Activated CD8-positive, alpha-beta T cell treated with anti-CD3 and anti-CD28 coated beads for 36 hours (primary cell): ENCODE measurements at regions of chr17 and their contacts with region 1.

Region 1: DNA sequence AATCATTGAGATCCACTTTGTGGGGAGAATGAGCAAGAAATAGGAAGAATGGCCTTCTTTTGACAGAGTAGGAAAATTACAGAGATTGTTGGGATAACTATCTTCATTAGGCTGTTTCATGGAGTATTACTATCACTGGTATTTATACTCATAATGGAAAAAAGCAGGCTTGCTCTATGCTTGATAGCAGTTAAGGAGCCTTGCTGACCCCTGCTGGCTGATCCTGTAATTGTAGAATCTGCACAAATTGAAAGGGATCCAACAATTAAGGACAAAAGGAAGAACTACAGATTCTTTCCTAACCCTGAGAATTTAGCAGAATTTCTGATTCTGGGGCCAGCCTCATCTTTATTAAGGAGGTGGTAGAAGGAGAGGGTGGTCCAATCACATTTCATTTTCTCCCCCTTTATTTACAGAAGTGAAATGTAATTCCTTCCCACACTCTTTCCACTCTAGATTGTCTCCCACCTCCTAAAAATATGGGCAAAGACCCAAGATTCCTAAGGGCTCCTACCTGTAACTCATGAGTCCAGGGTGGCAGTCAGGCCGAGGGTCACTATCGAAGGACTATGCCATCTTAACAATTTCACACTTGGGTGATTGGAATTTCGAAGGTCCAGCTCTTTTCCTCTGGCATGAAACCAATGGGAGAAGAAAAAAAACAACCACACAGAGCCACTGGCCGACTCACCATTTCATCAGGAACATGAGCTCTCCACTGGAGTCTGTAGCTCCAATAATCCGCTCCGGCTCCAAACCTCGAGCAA is 26.3 kb downstream of the NFE2L1 start:
- DNase-seq: peak; percentile 89
- ATAC-seq: peak; percentile 90
- H3K4me3 Mint-ChIP-seq: no peak overlapping the region
- H3K27ac Mint-ChIP-seq: no peak overlapping the region
- H3K4me1 Mint-ChIP-seq: no peaks in the 10 kb centered on the region
- H3K27me3 Mint-ChIP-seq: no peaks in the 10 kb centered on the region
- CTCF ChIP-seq: peak; percentile 79

Region 2: DNA sequence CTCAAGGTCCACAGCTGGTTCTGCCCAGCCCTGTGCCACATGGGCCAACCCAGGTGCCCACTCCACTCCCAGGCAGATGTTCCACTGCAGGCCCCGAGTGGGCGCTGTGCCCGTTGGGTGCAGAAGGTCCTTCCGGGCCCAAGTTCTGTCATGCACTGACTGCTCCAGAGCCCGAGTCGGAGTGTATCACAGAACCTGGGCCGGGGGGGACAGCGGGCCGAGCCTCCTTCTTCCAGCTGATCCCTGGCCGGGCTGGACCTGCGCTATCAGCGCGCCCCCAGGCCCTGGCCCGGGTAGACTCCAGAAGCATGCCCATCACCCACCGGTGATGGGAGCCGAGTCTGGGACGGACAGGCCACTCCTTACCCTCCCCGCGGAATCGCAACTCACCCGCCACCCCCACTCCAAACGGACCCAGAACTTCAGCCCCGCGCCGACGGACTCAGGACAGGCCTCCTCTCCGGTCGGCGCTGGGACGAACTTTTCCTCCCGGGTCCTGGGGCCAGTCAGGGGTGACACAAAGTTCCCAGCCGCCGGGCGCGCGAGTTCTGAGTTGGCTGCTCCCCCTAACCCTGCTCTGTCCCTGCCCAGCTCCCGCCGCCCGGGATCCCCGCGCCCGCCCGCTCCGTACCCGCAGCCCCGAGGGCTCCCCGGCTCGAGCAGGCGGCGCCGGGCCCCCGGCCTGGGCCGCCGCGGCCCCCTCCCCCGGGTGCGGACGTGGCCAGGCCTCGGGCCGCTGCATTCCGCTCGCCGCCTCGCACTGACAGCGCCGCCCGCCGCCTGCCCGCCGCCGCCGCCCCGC is 37.3 kb before region 1 on chr17 and contains the start of gene COPZ2:
- CTCF ChIA-PET with region 1: interaction called, 22 read pairs
- POLR2A ChIA-PET with region 1: no interaction called
- intact Hi-C with region 1: no loop called
- DNase-seq: peak; percentile 74
- ATAC-seq: peak; percentile 92
- H3K4me3 Mint-ChIP-seq: peak within 1 kb of the TSS; percentile 72
- H3K27ac Mint-ChIP-seq: peak within 1 kb of the TSS; percentile 58
- H3K4me1 Mint-ChIP-seq: peaks cover 8% of the 10 kb centered on the region
- H3K27me3 Mint-ChIP-seq: peaks cover 29% of the 10 kb centered on the region
- CTCF ChIP-seq: peak; percentile 83
- total RNA-seq, gene COPZ2: 4.3 to 4.6 TPM

Region 3: GRCh38 chr17:48054238-48055185 is 20.0 kb before region 1 on chr17:
- CTCF ChIA-PET with region 1: interaction called, 186 read pairs
- POLR2A ChIA-PET with region 1: interaction called, 4 read pairs
- intact Hi-C with region 1: no loop called
- DNase-seq: no peak
- ATAC-seq: no peak
- H3K4me3 Mint-ChIP-seq: peak overlapping the region; percentile 61
- H3K27ac Mint-ChIP-seq: peak overlapping the region; percentile 99
- H3K4me1 Mint-ChIP-seq: peaks cover 64% of the 10 kb centered on the region
- H3K27me3 Mint-ChIP-seq: no peaks in the 10 kb centered on the region
- CTCF ChIP-seq: no peak

Region 4: GRCh38 chr17:48093341-48094045 is 19.0 kb after region 1 on chr17:
- CTCF ChIA-PET with region 1: interaction called, 44 read pairs
- POLR2A ChIA-PET with region 1: interaction called, 3 read pairs
- intact Hi-C with region 1: no loop called
- DNase-seq: no peak
- ATAC-seq: no peak
- H3K4me3 Mint-ChIP-seq: no peak overlapping the region
- H3K27ac Mint-ChIP-seq: no peak overlapping the region
- H3K4me1 Mint-ChIP-seq: peaks cover 13% of the 10 kb centered on the region
- H3K27me3 Mint-ChIP-seq: no peaks in the 10 kb centered on the region
- CTCF ChIP-seq: no peak

Region 5: GRCh38 chr17:48131216-48131824 is 56.8 kb after region 1 on chr17:
- CTCF ChIA-PET with region 1: interaction called, 135 read pairs
- POLR2A ChIA-PET with region 1: no interaction called
- intact Hi-C with region 1: no loop called
- DNase-seq: peak; percentile 66
- ATAC-seq: peak; percentile 78
- H3K4me3 Mint-ChIP-seq: no peak overlapping the region
- H3K27ac Mint-ChIP-seq: no peak overlapping the region
- H3K4me1 Mint-ChIP-seq: no peaks in the 10 kb centered on the region
- H3K27me3 Mint-ChIP-seq: no peaks in the 10 kb centered on the region
- CTCF ChIP-seq: peak; percentile 89

Region 6: DNA sequence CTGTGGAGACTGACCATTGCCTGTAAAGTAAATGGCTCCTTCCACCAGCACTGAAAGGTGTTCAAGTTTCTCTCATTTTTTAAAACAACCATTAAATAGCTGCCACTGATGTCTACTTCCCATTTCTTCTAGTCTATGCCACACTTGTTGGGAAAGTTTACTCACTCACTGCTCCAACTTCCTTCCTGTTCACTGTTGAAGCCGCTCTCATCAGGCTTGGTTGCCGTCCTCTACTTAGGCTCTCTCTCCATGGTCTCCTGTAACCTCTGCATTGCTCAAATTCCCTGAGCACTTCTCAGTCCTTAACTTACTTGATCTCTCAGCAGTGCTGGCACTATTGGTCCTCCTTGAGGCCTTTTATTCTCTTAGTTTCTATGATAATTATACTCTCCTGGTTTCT is 65.4 kb after region 1 on chr17:
- CTCF ChIA-PET with region 1: interaction called, 135 read pairs
- POLR2A ChIA-PET with region 1: no interaction called
- intact Hi-C with region 1: no loop called
- DNase-seq: no peak
- ATAC-seq: peak; percentile 40
- H3K4me3 Mint-ChIP-seq: no peak overlapping the region
- H3K27ac Mint-ChIP-seq: peak overlapping the region; percentile 42
- H3K4me1 Mint-ChIP-seq: peaks cover 22% of the 10 kb centered on the region
- H3K27me3 Mint-ChIP-seq: no peaks in the 10 kb centered on the region
- CTCF ChIP-seq: no peak